Activated CD4-positive, alpha-beta T cell treated with anti-CD3 and anti-CD28 coated beads for 36 hours (primary cell): ENCODE measurements at regions of chr1 and their contacts with region 1.

Region 1: DNA sequence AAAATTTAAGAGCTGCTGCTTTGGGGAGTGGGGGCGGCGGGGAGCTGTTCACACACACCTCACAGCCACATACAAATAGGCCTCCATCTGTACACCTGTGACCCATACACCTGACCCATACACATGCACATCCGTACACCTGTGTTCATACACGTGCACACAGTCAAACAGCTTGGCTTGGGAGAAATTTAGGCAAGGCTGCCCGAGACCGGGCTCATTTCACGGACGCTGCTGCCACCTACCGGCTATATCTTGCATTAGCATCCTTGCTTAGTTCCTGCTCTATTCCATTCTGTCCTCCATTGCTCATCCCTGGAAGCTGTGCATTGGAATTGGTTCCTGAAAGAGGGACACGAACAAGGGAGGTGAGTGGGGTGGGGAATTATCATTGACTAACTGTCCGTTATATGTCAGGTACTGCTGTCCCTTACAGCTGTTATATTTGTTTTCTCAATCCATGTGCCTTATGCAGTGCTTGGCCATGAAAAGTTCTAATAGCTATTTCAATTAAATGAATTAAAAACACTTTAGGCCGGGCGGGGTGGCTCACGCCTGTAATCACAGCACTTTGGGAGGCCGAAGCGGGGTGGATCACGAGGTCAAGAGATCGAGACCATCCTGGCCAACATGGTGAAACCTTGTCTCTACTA is 37.1 kb upstream of the EPB41 start:
- DNase-seq: peak; percentile 86
- ATAC-seq: peak; percentile 70
- H3K4me3 Mint-ChIP-seq: no peak overlapping the region
- H3K27ac Mint-ChIP-seq: no peak overlapping the region
- H3K4me1 Mint-ChIP-seq: peaks cover 10% of the 10 kb centered on the region
- H3K27me3 Mint-ChIP-seq: no peaks in the 10 kb centered on the region

Region 2: GRCh38 chr1:28359592-28360239 is 517.5 kb before region 1 on chr1:
- CTCF ChIA-PET with region 1: interaction called, 13 read pairs
- POLR2A ChIA-PET with region 1: no interaction called
- intact Hi-C with region 1: loop called (anchors 1 kb)
- DNase-seq: peak; percentile 88
- ATAC-seq: peak; percentile 78
- H3K4me3 Mint-ChIP-seq: no peak overlapping the region
- H3K27ac Mint-ChIP-seq: no peak overlapping the region
- H3K4me1 Mint-ChIP-seq: no peaks in the 10 kb centered on the region
- H3K27me3 Mint-ChIP-seq: no peaks in the 10 kb centered on the region

Region 3: DNA sequence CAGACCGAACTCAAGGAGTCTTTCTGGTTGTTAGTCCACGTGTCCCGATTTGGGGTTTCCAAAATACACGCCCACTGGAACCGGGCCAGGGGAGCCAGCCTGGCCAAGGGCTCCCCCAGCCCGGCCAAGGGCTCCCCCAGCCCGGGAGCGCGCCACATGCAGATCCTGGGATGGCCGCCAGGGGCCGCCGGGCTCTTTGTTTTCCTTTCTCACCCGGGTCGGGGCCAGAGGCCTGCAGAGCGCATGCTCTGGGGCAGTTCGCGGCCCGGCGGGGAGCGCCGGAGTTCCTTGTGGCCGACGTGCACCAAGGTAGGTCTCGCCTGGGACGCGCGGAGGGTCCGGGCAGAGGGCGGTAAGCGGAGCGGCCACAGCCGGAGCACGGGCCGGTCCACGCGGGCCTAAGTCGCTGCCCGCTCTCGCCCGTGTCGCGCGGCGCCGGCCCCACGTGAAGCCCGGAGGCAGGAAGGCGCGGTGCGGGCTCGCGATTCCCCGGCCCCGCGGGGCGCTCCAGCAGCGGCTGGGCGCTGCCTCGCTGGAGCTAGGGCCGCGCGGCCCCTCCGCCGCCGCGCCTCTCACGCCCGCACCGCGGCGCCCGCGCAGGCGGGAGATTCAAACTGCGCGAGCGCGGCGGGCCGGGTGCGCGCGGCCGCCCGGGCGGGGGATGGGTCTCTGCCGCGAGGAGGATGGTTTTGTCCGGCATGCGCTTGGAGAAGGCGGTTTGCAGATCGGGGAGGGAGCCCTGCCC is 359.1 kb before region 1 on chr1:
- CTCF ChIA-PET with region 1: interaction called, 5 read pairs
- POLR2A ChIA-PET with region 1: no interaction called
- intact Hi-C with region 1: loop called (anchors 1 kb)
- DNase-seq: peak; percentile 95
- ATAC-seq: peak; percentile 66
- H3K4me3 Mint-ChIP-seq: peak overlapping the region; percentile 77
- H3K27ac Mint-ChIP-seq: peak overlapping the region; percentile 83
- H3K4me1 Mint-ChIP-seq: peaks cover 34% of the 10 kb centered on the region
- H3K27me3 Mint-ChIP-seq: no peaks in the 10 kb centered on the region

Region 4: GRCh38 chr1:28782011-28782410 is 95.2 kb before region 1 on chr1:
- CTCF ChIA-PET with region 1: interaction called, 117 read pairs
- POLR2A ChIA-PET with region 1: interaction called, 3 read pairs
- intact Hi-C with region 1: loop called (anchors 1 kb)
- DNase-seq: no peak
- ATAC-seq: no peak
- H3K4me3 Mint-ChIP-seq: no peak overlapping the region
- H3K27ac Mint-ChIP-seq: no peak overlapping the region
- H3K4me1 Mint-ChIP-seq: peaks cover 6% of the 10 kb centered on the region
- H3K27me3 Mint-ChIP-seq: peaks cover 3% of the 10 kb centered on the region

Region 5: DNA sequence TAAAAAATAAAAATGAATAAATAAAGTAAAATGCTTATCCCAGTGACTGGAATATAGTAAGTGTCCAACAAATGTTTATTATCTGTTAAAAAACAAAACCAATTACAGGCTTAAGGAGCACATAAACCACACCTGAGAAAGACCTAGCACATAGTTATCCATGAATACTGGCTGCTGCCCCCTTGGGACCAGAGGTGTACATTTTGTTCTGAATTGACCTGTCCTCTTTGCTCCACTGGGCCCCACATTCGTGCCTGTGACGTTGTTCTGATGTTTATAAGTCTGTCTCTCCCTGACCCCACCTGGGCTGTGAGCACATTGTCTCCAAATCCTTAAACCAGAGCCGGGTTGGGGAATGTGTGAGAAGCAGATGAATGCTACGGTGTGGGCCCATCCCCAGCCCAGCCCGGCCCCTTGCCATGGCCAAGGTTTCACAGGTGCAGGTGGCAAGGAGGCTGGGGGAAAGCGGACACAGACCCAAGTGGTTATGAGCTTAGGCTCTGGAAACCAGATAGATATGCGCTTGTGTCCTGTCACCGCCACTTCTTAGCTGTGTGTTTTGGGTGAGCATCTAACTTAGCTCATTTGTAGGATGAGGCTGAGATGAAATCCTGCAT is 36.2 kb before region 1 on chr1:
- CTCF ChIA-PET with region 1: interaction called, 10 read pairs
- POLR2A ChIA-PET with region 1: no interaction called
- intact Hi-C with region 1: no loop called
- DNase-seq: no peak
- ATAC-seq: no peak
- H3K4me3 Mint-ChIP-seq: no peak overlapping the region
- H3K27ac Mint-ChIP-seq: no peak overlapping the region
- H3K4me1 Mint-ChIP-seq: peaks cover 7% of the 10 kb centered on the region
- H3K27me3 Mint-ChIP-seq: peaks cover 7% of the 10 kb centered on the region

Region 6: GRCh38 chr1:29033829-29034466 is 156.7 kb after region 1 on chr1:
- CTCF ChIA-PET with region 1: interaction called, 284 read pairs
- POLR2A ChIA-PET with region 1: no interaction called
- intact Hi-C with region 1: loop called (anchors 1 kb)
- DNase-seq: no peak
- ATAC-seq: peak; percentile 53
- H3K4me3 Mint-ChIP-seq: no peak overlapping the region
- H3K27ac Mint-ChIP-seq: no peak overlapping the region
- H3K4me1 Mint-ChIP-seq: no peaks in the 10 kb centered on the region
- H3K27me3 Mint-ChIP-seq: no peaks in the 10 kb centered on the region

Region 7: DNA sequence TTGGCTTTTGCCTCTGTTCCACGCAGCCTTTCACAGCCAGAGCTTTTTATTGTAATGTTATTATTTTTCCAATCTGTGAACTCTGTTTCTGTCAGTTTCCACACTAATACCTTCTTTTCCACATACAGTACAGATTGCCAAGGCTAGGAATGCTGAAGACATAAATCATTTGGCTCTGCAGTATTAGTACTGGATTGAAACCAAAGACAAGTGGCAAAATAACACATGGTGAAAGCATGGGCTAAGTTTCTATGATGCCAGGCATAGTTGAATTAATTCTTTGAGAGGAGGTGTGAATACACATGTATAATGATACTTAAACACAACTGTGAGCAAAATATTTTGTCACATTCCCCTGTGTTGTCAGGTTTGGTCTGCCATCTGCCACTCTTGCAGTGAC is 172.9 kb after region 1 on chr1:
- CTCF ChIA-PET with region 1: interaction called, 11 read pairs
- POLR2A ChIA-PET with region 1: no interaction called
- intact Hi-C with region 1: no loop called
- DNase-seq: no peak
- ATAC-seq: no peak
- H3K4me3 Mint-ChIP-seq: no peak overlapping the region
- H3K27ac Mint-ChIP-seq: peak overlapping the region; percentile 31
- H3K4me1 Mint-ChIP-seq: peaks cover 8% of the 10 kb centered on the region
- H3K27me3 Mint-ChIP-seq: no peaks in the 10 kb centered on the region